Breast epithelium (tissue), 4 donors: ENCODE measurements at regions of chr12 and their contacts with region 1.

Region 1: GRCh38 chr12:105317942-105318621 is 12.4 kb upstream of the C12orf75 start:
- DNase-seq: no peak
- H3K4me3 ChIP-seq: no peak overlapping the region
- H3K27ac ChIP-seq: no peak overlapping the region
- H3K4me1 ChIP-seq: no peaks in the 10 kb centered on the region
- H3K27me3 ChIP-seq: no peaks in the 10 kb centered on the region
- CTCF ChIP-seq: no peak
- POLR2A ChIP-seq: no peak

Region 2: GRCh38 chr12:105084251-105085250 is 233.5 kb before region 1 on chr12 and contains the start of gene ALDH1L2:
- intact Hi-C with region 1: loop called (anchors 5 kb)
- DNase-seq: peak; percentile 62 to 73
- H3K4me3 ChIP-seq: peak within 1 kb of the TSS; percentile 57 to 76 (median 60)
- H3K27ac ChIP-seq: peak within 1 kb of the TSS in 1 of 2 donors; percentile 36
- H3K4me1 ChIP-seq: no peaks in the 10 kb centered on the region
- H3K27me3 ChIP-seq: no peaks in the 10 kb centered on the region
- CTCF ChIP-seq: no peak
- POLR2A ChIP-seq: no peak
- total RNA-seq, gene ALDH1L2: 2.3 to 7.8 (median 6.7) TPM